AG04450 (cell line): ENCODE measurements at regions of chr9 and their contacts with region 1.

Region 1: GRCh38 chr9:72364679-72365524 is at the start of gene ZFAND5:
- DNase-seq: peak; percentile 97
- H3K4me3 ChIP-seq: peak within 1 kb of the TSS; percentile 67
- H3K27ac ChIP-seq: peak within 1 kb of the TSS; percentile 100
- H3K27me3 ChIP-seq: no peaks in the 10 kb centered on the region
- CTCF ChIP-seq: no peak
- polyA plus RNA-seq, gene ZFAND5: 195 and 224 TPM in 2 replicates

Region 2: DNA sequence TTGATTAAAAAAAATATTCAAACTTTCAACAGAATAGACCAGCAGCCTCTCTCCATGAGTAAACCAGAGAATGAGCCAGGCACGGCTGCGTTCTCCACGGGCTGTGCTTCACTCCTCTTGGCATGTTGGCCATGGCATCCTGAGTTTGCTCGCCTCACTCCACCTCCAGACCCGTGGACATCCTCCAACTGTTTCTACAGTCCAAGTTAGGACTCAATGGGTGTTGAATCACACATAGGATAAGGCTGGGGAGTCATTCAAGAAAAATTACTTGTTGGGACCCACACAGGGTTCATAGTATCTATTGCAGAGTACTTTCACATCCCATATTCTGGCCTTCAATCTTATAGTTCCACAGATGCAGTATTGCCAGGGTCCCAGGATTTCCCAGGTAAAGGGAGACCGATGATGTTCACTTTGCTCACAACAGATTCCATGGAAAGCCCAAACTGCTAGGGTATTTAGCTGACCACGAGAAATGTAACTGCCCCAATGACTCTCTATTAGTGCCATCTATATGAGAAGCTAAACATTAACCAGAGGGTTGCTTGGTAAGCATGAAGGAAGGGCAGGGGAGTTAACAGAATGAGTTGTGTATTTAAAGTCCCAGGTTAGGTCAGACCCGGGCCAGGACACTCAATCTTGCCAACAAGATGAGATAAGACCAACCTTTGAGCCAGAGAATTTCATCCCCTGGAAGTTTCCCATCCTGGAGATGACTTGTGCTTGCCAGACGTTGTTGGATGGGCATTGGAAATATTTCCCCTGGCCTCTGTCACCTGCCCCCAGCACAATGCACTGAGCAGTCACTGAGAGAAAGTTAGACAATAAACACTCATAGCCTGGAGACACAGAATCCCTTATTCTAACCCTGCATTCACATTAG is 235.4 kb before region 1 on chr9:
- CTCF ChIA-PET with region 1: no interaction called
- POLR2A ChIA-PET with region 1: no interaction called
- DNase-seq: no peak
- H3K4me3 ChIP-seq: no peak overlapping the region
- H3K27ac ChIP-seq: no peak overlapping the region
- H3K27me3 ChIP-seq: no peaks in the 10 kb centered on the region
- CTCF ChIP-seq: no peak

Region 3: GRCh38 chr9:72140582-72140981 is 224.3 kb before region 1 on chr9:
- CTCF ChIA-PET with region 1: no interaction called
- POLR2A ChIA-PET with region 1: no interaction called
- DNase-seq: no peak
- H3K4me3 ChIP-seq: no peak overlapping the region
- H3K27ac ChIP-seq: no peak overlapping the region
- H3K27me3 ChIP-seq: peaks cover 2% of the 10 kb centered on the region
- CTCF ChIP-seq: no peak

Region 4: GRCh38 chr9:72315510-72316311 is 49.2 kb before region 1 on chr9:
- CTCF ChIA-PET with region 1: no interaction called
- POLR2A ChIA-PET with region 1: interaction called, 21 read pairs
- DNase-seq: no peak
- H3K4me3 ChIP-seq: no peak overlapping the region
- H3K27ac ChIP-seq: peak overlapping the region; percentile 22
- H3K27me3 ChIP-seq: no peaks in the 10 kb centered on the region
- CTCF ChIP-seq: no peak

Region 5: DNA sequence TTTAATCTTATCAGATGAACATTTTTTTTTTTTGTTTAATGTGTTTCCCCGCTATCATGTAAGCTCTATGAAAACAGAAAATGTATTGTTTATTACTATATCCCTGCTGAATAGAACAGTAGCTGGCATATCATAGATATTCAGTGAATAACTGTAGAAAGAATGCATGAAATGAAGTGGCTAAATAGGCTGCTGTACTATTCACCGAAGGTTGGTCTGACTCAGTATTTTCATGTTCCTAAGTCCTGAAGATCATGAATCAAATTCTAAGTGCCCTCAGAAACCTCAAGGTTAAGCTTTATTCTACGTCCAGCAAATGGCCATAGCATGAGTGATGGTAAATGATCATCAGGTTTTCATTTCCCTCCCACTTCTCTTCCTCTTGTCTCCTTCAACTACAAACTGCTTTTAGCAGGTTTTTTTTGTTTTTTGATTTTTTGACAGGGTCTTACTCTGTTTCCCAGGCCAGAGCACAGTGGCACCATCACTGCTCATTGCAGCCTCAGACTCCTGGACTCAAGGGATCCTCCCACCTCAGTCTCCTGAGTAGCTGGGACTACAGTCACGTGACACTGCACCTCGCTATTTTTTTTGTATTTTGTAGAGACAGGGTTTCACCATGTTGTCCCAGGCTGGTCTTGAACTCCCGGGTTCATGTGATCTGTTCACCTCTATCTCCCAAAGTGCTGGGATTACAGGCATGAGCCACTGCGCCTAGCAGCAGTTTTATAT is 19.2 kb after region 1 on chr9:
- CTCF ChIA-PET with region 1: no interaction called
- POLR2A ChIA-PET with region 1: interaction called, 32 read pairs
- DNase-seq: peak; percentile 66
- H3K4me3 ChIP-seq: no peak overlapping the region
- H3K27ac ChIP-seq: peak overlapping the region; percentile 63
- H3K27me3 ChIP-seq: no peaks in the 10 kb centered on the region
- CTCF ChIP-seq: no peak

Region 6: DNA sequence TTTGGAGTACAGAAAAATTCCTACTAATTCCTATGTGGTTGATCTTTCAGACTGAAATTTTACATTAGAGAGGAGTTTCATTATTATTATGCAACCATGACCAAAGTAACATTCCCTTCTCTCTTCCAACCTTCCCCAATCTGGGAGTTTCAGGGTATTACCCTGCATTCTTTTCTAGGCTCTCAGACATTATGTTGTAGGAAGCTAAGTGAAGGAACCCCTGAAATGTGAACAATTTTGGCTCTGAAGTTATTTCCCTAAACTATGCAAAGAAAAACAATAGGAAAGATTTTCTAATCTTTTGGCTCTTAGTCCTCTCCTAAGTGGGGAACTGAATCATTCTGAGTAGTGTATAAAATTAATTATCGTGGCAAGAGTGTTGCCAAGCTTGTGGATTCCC is 63.4 kb after region 1 on chr9:
- CTCF ChIA-PET with region 1: no interaction called
- POLR2A ChIA-PET with region 1: interaction called, 10 read pairs
- DNase-seq: no peak
- H3K4me3 ChIP-seq: no peak overlapping the region
- H3K27ac ChIP-seq: no peak overlapping the region
- H3K27me3 ChIP-seq: no peaks in the 10 kb centered on the region
- CTCF ChIP-seq: no peak

Region 7: GRCh38 chr9:72526901-72527800 is 162.2 kb after region 1 on chr9:
- CTCF ChIA-PET with region 1: interaction called, 3 read pairs
- POLR2A ChIA-PET with region 1: interaction called, 23 read pairs
- DNase-seq: peak; percentile 74
- H3K4me3 ChIP-seq: peak overlapping the region; percentile 49
- H3K27ac ChIP-seq: peak overlapping the region; percentile 91
- H3K27me3 ChIP-seq: no peaks in the 10 kb centered on the region
- CTCF ChIP-seq: no peak

Region 8: GRCh38 chr9:72577212-72577753 is 212.4 kb after region 1 on chr9:
- CTCF ChIA-PET with region 1: interaction called, 4 read pairs
- POLR2A ChIA-PET with region 1: interaction called, 27 read pairs
- DNase-seq: peak; percentile 50
- H3K4me3 ChIP-seq: no peak overlapping the region
- H3K27ac ChIP-seq: peak overlapping the region; percentile 54
- H3K27me3 ChIP-seq: no peaks in the 10 kb centered on the region
- CTCF ChIP-seq: no peak

Region 9: GRCh38 chr9:72592502-72593403 is 227.9 kb after region 1 on chr9:
- CTCF ChIA-PET with region 1: interaction called, 23 read pairs
- POLR2A ChIA-PET with region 1: interaction called, 24 read pairs
- DNase-seq: peak; percentile 42
- H3K4me3 ChIP-seq: no peak overlapping the region
- H3K27ac ChIP-seq: no peak overlapping the region
- H3K27me3 ChIP-seq: no peaks in the 10 kb centered on the region
- CTCF ChIP-seq: peak; percentile 75

Region 10: DNA sequence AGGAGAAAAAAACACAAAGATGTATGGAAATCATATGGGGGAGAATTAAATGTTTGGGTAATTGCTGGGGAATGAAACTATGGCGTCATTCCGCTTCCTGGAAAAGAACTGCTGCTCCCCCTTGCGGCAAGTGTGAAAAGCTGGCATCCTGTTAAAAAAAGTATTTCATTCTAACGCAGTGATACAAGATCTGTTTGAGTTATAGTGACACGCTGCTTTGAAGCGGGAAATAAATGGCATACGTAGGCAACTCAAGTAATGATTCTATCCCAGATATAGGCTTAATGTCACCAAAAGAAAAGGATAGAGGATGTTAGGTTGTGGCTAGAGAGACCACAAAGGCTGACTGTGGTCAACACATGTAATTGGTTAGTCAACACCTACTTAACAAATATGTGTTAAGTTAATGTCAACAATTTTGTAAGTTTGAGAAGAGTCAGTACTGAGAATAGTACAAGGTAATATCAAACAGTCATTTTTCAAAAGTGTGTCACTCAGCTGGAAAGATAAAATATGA is 658.2 kb after region 1 on chr9:
- CTCF ChIA-PET with region 1: no interaction called
- POLR2A ChIA-PET with region 1: no interaction called
- DNase-seq: peak; percentile 27
- H3K4me3 ChIP-seq: no peak overlapping the region
- H3K27ac ChIP-seq: no peak overlapping the region
- H3K27me3 ChIP-seq: no peaks in the 10 kb centered on the region
- CTCF ChIP-seq: peak; percentile 87